CD4-positive, alpha-beta T cell (primary cell): ENCODE measurements at regions of chr4 and their contacts with region 1.

Region 1: DNA sequence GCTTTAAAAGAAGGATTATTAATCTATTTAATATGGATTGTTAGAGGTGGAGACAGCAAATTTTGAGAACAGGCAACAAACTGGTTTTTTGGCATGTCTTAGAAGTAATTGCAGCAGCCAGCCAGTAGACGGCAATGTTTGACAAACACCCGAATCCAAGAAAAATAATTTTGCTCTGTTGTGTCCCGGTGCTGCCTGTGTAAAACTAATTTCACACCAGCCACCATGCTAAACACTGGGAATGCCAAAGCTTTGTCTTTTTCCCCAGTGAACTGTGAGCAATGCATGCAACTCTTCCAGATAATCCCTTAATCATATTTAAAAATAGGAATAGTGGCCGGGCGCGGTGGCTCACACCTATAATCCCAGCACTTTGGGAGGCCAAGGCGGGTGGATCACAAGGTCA is 25.9 kb downstream of the SMIM31 start:
- DNase-seq: peak in 4 of 14 experiments; percentile 0 to 34 (median 21)
- ATAC-seq: no peak
- H3K4me3 ChIP-seq: no peak overlapping the region
- H3K4me3 Mint-ChIP-seq: no peak overlapping the region
- H3K27ac ChIP-seq: no peak overlapping the region
- H3K27ac Mint-ChIP-seq: no peak overlapping the region
- H3K4me1 ChIP-seq: no peaks in the 10 kb centered on the region
- H3K4me1 Mint-ChIP-seq: no peaks in the 10 kb centered on the region
- H3K27me3 ChIP-seq: no peaks in the 10 kb centered on the region
- H3K27me3 Mint-ChIP-seq: peaks cover 4% of the 10 kb centered on the region
- CTCF ChIP-seq: peak; percentile 53

Region 2: GRCh38 chr4:165096776-165097175 is 317.0 kb after region 1 on chr4:
- CTCF ChIA-PET with region 1: no interaction called
- POLR2A ChIA-PET with region 1: no interaction called
- intact Hi-C with region 1: loop called in 1 of 2 experiments (anchors 5 kb)
- DNase-seq: peak in 2 of 14 experiments; percentile 16 to 17
- ATAC-seq: no peak
- H3K4me3 ChIP-seq: no peak overlapping the region
- H3K4me3 Mint-ChIP-seq: no peak overlapping the region
- H3K27ac ChIP-seq: no peak overlapping the region
- H3K27ac Mint-ChIP-seq: no peak overlapping the region
- H3K4me1 ChIP-seq: no peaks in the 10 kb centered on the region
- H3K4me1 Mint-ChIP-seq: no peaks in the 10 kb centered on the region
- H3K27me3 ChIP-seq: no peaks in the 10 kb centered on the region
- H3K27me3 Mint-ChIP-seq: no peaks in the 10 kb centered on the region
- CTCF ChIP-seq: peak; percentile 44

Region 3: GRCh38 chr4:165621983-165622382 is 842.2 kb after region 1 on chr4:
- CTCF ChIA-PET with region 1: no interaction called
- POLR2A ChIA-PET with region 1: no interaction called
- intact Hi-C with region 1: no loop called
- DNase-seq: no peak
- ATAC-seq: no peak
- H3K4me3 ChIP-seq: no peak overlapping the region
- H3K4me3 Mint-ChIP-seq: no peak overlapping the region
- H3K27ac ChIP-seq: no peak overlapping the region
- H3K27ac Mint-ChIP-seq: no peak overlapping the region
- H3K4me1 ChIP-seq: no peaks in the 10 kb centered on the region
- H3K4me1 Mint-ChIP-seq: no peaks in the 10 kb centered on the region
- H3K27me3 ChIP-seq: no peaks in the 10 kb centered on the region
- H3K27me3 Mint-ChIP-seq: no peaks in the 10 kb centered on the region
- CTCF ChIP-seq: no peak